ENCODE measurements at regions of chr20 and their contacts with region 1.

Region 1: GRCh38 chr20:56636716-56637115 is 7.6 kb downstream of the TFAP2C start:
- DNase-seq: peak; percentile 89
- H3K27ac ChIP-seq: peak overlapping the region; percentile 65; the same call in 1 of the 2 replicates
- CTCF ChIP-seq: no peak

Region 2: GRCh38 chr20:56657879-56658278 is 21.2 kb after region 1 on chr20:
- CTCF ChIA-PET with region 1: interaction called, 5 read pairs
- POLR2A ChIA-PET with region 1: interaction called, 13 read pairs
- DNase-seq: no peak
- H3K27ac ChIP-seq: no peak overlapping the region
- CTCF ChIP-seq: no peak

Region 3: GRCh38 chr20:57323034-57323433 is 686.3 kb after region 1 on chr20:
- CTCF ChIA-PET with region 1: no interaction called
- POLR2A ChIA-PET with region 1: interaction called, 14 read pairs
- DNase-seq: peak; percentile 93
- H3K27ac ChIP-seq: peak overlapping the region; percentile 92
- CTCF ChIP-seq: no peak